Panc1 (cell line): ENCODE measurements at regions of chr10 and their contacts with region 1.

Region 1: DNA sequence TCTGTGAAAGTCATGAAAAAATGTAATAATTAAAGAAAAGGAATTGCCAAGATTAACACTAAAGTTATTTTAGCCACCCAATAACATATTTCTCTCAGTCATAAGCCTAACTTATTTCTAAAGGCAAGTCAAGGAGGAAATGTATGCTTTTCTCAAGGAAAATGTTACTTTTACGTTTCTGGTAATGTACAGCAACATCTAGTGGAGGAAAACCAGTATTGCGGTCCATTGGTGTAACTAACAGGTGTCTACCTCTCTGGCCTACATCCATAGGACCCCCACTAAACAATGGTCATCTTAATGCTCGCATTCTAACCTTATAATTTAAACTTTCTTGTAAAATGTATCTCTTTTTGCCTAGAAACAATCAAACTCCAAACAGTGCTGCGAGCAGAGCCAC is 437.5 kb downstream of the KIF20B start:
- DNase-seq: no peak
- ATAC-seq: no peak
- H3K4me3 ChIP-seq: no peak overlapping the region
- H3K27ac ChIP-seq: no peak overlapping the region
- H3K4me1 ChIP-seq: no peaks in the 10 kb centered on the region
- H3K27me3 ChIP-seq: no peaks in the 10 kb centered on the region
- CTCF ChIP-seq: peak; percentile 37; the same call in 1 of the 2 replicates

Region 2: GRCh38 chr10:89793649-89794254 is 345.1 kb before region 1 on chr10:
- CTCF ChIA-PET with region 1: no interaction called
- POLR2A ChIA-PET with region 1: no interaction called
- in situ Hi-C with region 1: no loop called
- intact Hi-C with region 1: loop called (anchors 5 kb)
- DNase-seq: peak; percentile 60
- ATAC-seq: peak; percentile 93
- H3K4me3 ChIP-seq: no peak overlapping the region
- H3K27ac ChIP-seq: no peak overlapping the region
- H3K4me1 ChIP-seq: no peaks in the 10 kb centered on the region
- H3K27me3 ChIP-seq: no peaks in the 10 kb centered on the region
- CTCF ChIP-seq: peak; percentile 87

Region 3: DNA sequence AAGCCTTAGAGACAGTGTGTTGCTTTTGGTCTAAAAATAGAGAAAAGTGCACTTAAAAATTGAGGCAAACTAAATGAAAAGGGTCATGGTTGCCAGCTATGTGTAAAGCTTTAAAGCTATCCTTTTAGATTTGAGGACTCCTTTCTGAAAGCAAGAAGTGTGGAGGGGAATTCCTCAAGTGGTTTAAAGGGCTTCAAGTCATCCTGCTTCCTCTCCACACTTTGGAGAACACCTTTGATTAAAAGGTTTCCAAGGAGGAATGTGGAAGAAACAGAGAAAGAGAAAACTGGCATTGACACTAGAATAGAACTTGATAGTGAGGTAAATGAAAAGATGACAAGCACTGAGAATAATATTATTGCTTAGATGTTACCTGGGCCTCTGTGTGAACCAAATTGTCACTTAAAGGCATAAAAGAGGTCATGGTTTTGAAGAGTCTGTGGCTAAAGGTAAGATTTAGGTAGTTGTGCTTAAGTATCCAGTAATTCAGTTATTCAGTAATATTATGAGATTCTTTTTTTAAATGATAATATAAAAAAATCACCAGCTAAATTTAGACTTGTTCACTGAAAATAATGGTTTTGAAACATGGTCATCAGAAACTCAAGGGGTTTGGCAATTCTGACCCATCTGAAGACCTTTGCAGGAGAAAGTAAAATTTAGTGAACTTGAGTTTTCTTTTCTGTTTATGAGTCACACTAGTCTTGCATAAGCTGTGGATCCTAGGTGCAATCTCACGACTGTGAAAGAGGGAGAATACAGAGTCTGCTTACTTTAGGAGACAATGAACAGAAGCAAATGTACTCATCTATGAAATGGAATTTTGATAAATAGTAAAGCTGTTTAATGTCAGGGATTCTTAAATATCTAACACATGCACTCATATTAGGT is 28.6 kb after region 1 on chr10:
- CTCF ChIA-PET with region 1: no interaction called
- POLR2A ChIA-PET with region 1: no interaction called
- in situ Hi-C with region 1: no loop called
- intact Hi-C with region 1: no loop called
- DNase-seq: no peak
- ATAC-seq: no peak
- H3K4me3 ChIP-seq: no peak overlapping the region
- H3K27ac ChIP-seq: no peak overlapping the region
- H3K4me1 ChIP-seq: no peaks in the 10 kb centered on the region
- H3K27me3 ChIP-seq: no peaks in the 10 kb centered on the region
- CTCF ChIP-seq: no peak

Region 4: GRCh38 chr10:90319188-90319914 is 180.5 kb after region 1 on chr10:
- CTCF ChIA-PET with region 1: no interaction called
- POLR2A ChIA-PET with region 1: no interaction called
- in situ Hi-C with region 1: no loop called
- intact Hi-C with region 1: no loop called
- DNase-seq: peak; percentile 91
- ATAC-seq: peak; percentile 99
- H3K4me3 ChIP-seq: no peak overlapping the region
- H3K27ac ChIP-seq: no peak overlapping the region
- H3K4me1 ChIP-seq: peaks cover 7% of the 10 kb centered on the region; the same call in 1 of the 2 replicates
- H3K27me3 ChIP-seq: no peaks in the 10 kb centered on the region
- CTCF ChIP-seq: no peak